ENCODE measurements at regions of chr3 and their contacts with region 1.

Region 1: GRCh38 chr3:9302425-9303181 is 53.2 kb upstream of the SRGAP3 start:
- DNase-seq: peak; percentile 84
- H3K4me3 ChIP-seq: peak overlapping the region; percentile 55
- H3K27ac ChIP-seq: no peak overlapping the region
- H3K4me1 ChIP-seq: peaks cover 8% of the 10 kb centered on the region
- H3K27me3 ChIP-seq: no peaks in the 10 kb centered on the region

Region 2: GRCh38 chr3:8769088-8769822 is 533.3 kb before region 1 on chr3 and contains the start of gene OXTR:
- in situ Hi-C with region 1: loop called (anchors 25 kb)
- DNase-seq: peak; percentile 90
- H3K4me3 ChIP-seq: peak within 1 kb of the TSS; percentile 83
- H3K27ac ChIP-seq: peak within 1 kb of the TSS; percentile 43
- H3K4me1 ChIP-seq: peaks cover 40% of the 10 kb centered on the region
- H3K27me3 ChIP-seq: no peaks in the 10 kb centered on the region
- total RNA-seq, gene OXTR: 269 and 340 TPM in 2 replicates

Region 3: GRCh38 chr3:8982509-8982908 is 320.1 kb before region 1 on chr3:
- in situ Hi-C with region 1: loop called (anchors 5 kb)
- DNase-seq: peak; percentile 29
- H3K4me3 ChIP-seq: no peak overlapping the region
- H3K27ac ChIP-seq: no peak overlapping the region
- H3K4me1 ChIP-seq: no peaks in the 10 kb centered on the region
- H3K27me3 ChIP-seq: no peaks in the 10 kb centered on the region

Region 4: GRCh38 chr3:9862391-9863057 is 559.9 kb after region 1 on chr3:
- in situ Hi-C with region 1: no loop called
- DNase-seq: peak; percentile 51
- H3K4me3 ChIP-seq: peak overlapping the region; percentile 45; the same call in 1 of the 2 replicates
- H3K27ac ChIP-seq: no peak overlapping the region
- H3K4me1 ChIP-seq: no peaks in the 10 kb centered on the region
- H3K27me3 ChIP-seq: no peaks in the 10 kb centered on the region

Measured in GM23248 (cell line).